Cardiac septum (tissue), 1 donor: ENCODE measurements at regions of chr2 and their contacts with region 1.

Region 1: GRCh38 chr2:157327621-157328500 is 2.2 kb upstream of the ERMN start:
- DNase-seq: peak; percentile 88

Region 2: GRCh38 chr2:157244691-157245090 is 83.2 kb before region 1 on chr2:
- intact Hi-C with region 1: no loop called
- DNase-seq: no peak

Region 3: DNA sequence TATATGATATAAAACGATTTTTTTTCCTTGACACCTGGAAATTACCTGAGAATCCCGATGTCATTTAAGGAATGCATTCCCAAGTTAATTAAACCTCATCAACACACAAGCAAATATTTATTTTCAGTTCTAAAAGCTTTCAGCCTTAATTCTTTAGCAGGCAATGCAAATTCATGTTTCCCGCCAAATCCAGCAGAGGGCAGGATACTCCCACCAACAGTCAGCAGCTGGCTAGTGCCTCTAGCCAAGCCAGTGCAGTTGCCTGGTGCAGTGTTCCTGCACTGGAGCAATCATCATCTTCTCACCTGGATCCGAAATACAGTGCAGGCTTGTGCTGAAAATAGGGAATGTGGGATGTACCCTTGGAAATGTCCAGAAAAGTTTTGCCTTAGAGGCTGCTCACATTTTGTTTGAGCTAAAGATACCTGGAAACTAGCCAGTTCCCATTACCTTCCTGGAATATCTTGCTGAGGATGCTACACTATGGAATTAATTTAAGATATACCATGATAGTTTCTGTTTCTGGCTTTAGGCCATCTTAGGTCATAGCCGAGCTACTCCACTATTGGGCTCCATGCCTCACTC is 164.4 kb after region 1 on chr2:
- intact Hi-C with region 1: loop called (anchors 5 kb)
- DNase-seq: no peak